Ascending aorta (tissue), 2 donors: ENCODE measurements at regions of chr7 and their contacts with region 1.

Region 1: DNA sequence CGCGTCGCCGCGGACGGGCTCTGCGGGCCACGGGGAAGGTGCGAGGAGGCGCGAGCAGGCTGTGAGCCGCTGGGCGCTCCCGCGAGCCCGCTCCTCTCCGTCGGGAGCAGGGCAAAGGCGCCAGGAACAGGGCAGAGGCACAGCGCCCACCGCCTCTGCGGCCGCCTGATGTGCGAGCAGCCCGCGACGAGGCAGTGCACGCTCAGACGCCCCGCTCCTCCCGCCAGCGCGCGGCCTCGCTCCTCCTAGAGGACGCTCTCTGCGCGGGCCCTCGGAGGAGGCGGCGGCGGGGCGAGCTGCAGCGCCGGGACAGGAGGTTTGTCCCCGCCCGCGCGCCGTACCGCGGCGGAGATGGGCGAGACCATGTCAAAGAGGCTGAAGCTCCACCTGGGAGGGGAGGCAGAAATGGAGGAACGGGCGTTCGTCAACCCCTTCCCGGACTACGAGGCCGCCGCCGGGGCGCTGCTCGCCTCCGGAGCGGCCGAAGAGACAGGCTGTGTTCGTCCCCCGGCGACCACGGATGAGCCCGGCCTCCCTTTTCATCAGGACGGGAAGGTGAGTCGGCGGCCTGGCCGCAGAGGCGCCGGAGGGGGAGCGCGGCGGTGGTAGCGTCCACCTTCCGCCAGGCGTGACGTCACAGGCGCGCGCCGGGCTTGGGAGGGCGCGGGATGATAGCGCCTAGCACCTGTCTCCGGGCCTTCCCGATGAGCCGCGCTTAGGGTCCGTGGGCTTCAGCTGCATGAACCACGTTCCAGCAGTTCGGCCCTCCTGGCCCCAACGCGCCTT is 731 bp downstream of the LANCL2 start:
- DNase-seq: peak; percentile 70 to 97
- H3K4me3 ChIP-seq: peak overlapping the region; percentile 64 to 100
- H3K27ac ChIP-seq: peak overlapping the region; percentile 98 to 99
- H3K4me1 ChIP-seq: peaks cover 5 to 10% of the 10 kb centered on the region in 2 donors
- H3K27me3 ChIP-seq: no peaks in the 10 kb centered on the region
- CTCF ChIP-seq: peak in 2 of 3 experiments; percentile 21 to 44

Region 2: DNA sequence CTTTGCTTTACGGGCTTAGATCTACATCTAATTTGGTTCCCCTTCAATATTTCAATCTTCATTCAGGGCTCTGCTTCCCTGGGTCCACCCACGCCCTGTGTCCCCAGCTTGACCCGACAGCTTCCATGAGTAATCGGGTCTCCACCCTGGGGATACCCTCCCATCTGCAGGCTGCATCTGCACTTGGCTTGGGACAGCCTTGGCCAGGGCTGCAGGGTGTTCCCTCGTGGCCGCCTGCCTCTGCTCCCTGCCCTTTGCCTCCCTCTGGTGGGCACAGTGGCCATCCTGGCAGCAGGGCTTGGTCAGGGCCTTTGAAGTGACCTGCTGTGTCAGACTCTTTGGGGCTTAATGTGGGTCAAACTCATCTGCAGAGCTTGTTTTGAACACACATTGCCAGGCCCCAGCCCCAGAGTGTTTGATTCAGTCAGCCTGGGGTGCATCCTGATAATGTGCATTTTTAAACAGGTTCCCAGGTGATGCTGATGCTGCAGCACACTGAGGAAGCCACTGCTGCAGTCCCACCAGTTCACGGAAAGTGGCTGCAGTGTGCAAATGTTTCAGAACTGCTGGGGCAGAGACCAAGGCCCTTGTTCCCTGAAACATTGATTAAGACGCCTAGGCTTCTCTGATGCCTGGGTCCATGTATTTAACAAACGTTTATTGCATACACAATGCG is 526.2 kb before region 1 on chr7:
- intact Hi-C with region 1: loop called (anchors 5 kb)
- DNase-seq: peak in 1 of 2 donors; percentile 84
- H3K4me3 ChIP-seq: no peak overlapping the region
- H3K27ac ChIP-seq: no peak overlapping the region
- H3K4me1 ChIP-seq: peaks cover 0 to 30% of the 10 kb centered on the region in 2 donors
- H3K27me3 ChIP-seq: no peaks in the 10 kb centered on the region
- CTCF ChIP-seq: peak; percentile 56 to 70 (median 68)

Region 3: GRCh38 chr7:55053651-55054571 is 312.0 kb before region 1 on chr7:
- intact Hi-C with region 1: loop called (anchors 10 kb)
- DNase-seq: peak in 1 of 2 donors; percentile 73
- H3K4me3 ChIP-seq: no peak overlapping the region
- H3K27ac ChIP-seq: peak overlapping the region; percentile 71 to 75
- H3K4me1 ChIP-seq: peaks cover 3 to 41% of the 10 kb centered on the region in 2 donors
- H3K27me3 ChIP-seq: no peaks in the 10 kb centered on the region
- CTCF ChIP-seq: peak; percentile 14 to 59 (median 22)

Region 4: DNA sequence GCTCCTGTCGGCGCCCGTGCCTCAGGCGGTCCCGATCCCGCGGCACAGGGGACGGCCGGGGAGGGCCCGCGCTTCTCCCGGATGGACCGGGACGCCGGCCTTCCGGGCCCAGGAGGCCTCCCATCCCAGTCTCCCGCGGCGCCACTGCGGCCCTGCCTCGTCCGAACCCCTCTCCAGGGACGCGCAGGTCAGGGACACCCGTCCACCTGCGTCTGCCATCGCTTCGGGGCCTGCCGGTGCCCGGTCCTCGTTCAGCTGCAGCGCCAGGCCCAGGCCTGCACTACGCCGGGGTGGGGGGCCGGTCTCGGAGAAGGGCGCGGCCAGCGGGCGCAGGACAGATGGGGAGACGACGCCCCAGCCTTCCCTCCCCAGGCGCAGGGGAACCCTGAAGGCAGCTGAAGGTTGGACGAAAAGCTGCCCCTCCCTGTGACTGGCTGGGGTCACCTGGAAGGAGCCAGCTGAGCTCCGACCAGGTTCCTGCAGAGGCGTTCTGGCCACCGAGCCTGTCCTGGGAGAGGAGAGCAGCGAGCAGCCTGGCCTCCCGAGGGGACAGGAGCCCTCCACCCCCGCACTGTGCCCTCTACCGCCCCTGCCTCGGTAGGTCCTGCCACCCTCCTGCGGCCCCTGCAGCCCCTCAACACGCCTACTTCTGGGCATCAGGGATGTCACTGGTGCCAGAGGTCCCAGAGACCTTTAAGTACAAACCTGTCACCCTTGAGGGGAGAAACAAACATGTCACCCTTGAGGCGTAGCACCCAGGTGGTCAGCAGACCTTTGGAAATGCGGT is 83.5 kb after region 1 on chr7:
- intact Hi-C with region 1: no loop called
- DNase-seq: no peak
- H3K4me3 ChIP-seq: no peak overlapping the region
- H3K27ac ChIP-seq: no peak overlapping the region
- H3K4me1 ChIP-seq: no peaks in the 10 kb centered on the region
- H3K27me3 ChIP-seq: no peaks in the 10 kb centered on the region
- CTCF ChIP-seq: no peak

Region 5: GRCh38 chr7:55951637-55952351 is 585.9 kb after region 1 on chr7 and contains the start of gene MRPS17:
- intact Hi-C with region 1: loop called (anchors 1 kb)
- DNase-seq: peak; percentile 69 to 93
- H3K4me3 ChIP-seq: peak within 1 kb of the TSS; percentile 88 to 99
- H3K27ac ChIP-seq: peak within 1 kb of the TSS; percentile 85 to 90
- H3K4me1 ChIP-seq: peaks cover 0 to 5% of the 10 kb centered on the region in 2 donors
- H3K27me3 ChIP-seq: no peaks in the 10 kb centered on the region
- CTCF ChIP-seq: no peak
- total RNA-seq, gene MRPS17: 0.43 TPM

Region 6: GRCh38 chr7:56188823-56189346 is 823.0 kb after region 1 on chr7:
- intact Hi-C with region 1: loop called (anchors 10 kb)
- DNase-seq: peak in 1 of 2 donors; percentile 74
- H3K4me3 ChIP-seq: no peak overlapping the region
- H3K27ac ChIP-seq: peak overlapping the region; percentile 76 to 78
- H3K4me1 ChIP-seq: peaks cover 4 to 17% of the 10 kb centered on the region in 2 donors
- H3K27me3 ChIP-seq: no peaks in the 10 kb centered on the region
- CTCF ChIP-seq: no peak